CD8-positive, alpha-beta T cell (primary cell): ENCODE measurements at regions of chr12 and their contacts with region 1.

Region 1: GRCh38 chr12:56299853-56300643 is at the start of gene CS:
- DNase-seq: peak; percentile 97 to 99 (median 99)
- ATAC-seq: peak; percentile 95
- H3K4me3 ChIP-seq: peak within 1 kb of the TSS; percentile 67 to 80
- H3K4me3 Mint-ChIP-seq: peak within 1 kb of the TSS; percentile 95
- H3K27ac ChIP-seq: peak within 1 kb of the TSS; percentile 77 to 95
- H3K27ac Mint-ChIP-seq: peak within 1 kb of the TSS; percentile 94
- H3K4me1 ChIP-seq: peaks cover 45% of the 10 kb centered on the region
- H3K4me1 Mint-ChIP-seq: peaks cover 55% of the 10 kb centered on the region
- H3K27me3 ChIP-seq: no peaks in the 10 kb centered on the region
- H3K27me3 Mint-ChIP-seq: no peaks in the 10 kb centered on the region
- CTCF ChIP-seq: no peak
- total RNA-seq, gene CS: 154 to 159 TPM

Region 2: GRCh38 chr12:56258057-56258819 is 41.8 kb before region 1 on chr12 and contains the start of gene ANKRD52:
- CTCF ChIA-PET with region 1: no interaction called
- POLR2A ChIA-PET with region 1: interaction called, 3 read pairs
- intact Hi-C with region 1: loop called in 1 of 2 experiments (anchors 2 kb)
- DNase-seq: peak; percentile 61 to 92 (median 77)
- ATAC-seq: peak; percentile 95
- H3K4me3 ChIP-seq: peak within 1 kb of the TSS; percentile 79 to 99
- H3K4me3 Mint-ChIP-seq: peak within 1 kb of the TSS; percentile 94
- H3K27ac ChIP-seq: peak within 1 kb of the TSS; percentile 77
- H3K27ac Mint-ChIP-seq: peak within 1 kb of the TSS; percentile 88
- H3K4me1 ChIP-seq: peaks cover 21% of the 10 kb centered on the region
- H3K4me1 Mint-ChIP-seq: peaks cover 21% of the 10 kb centered on the region
- H3K27me3 ChIP-seq: no peaks in the 10 kb centered on the region
- H3K27me3 Mint-ChIP-seq: no peaks in the 10 kb centered on the region
- CTCF ChIP-seq: peak; percentile 64
- total RNA-seq, gene ANKRD52: 27.7 to 29.9 TPM

Region 3: DNA sequence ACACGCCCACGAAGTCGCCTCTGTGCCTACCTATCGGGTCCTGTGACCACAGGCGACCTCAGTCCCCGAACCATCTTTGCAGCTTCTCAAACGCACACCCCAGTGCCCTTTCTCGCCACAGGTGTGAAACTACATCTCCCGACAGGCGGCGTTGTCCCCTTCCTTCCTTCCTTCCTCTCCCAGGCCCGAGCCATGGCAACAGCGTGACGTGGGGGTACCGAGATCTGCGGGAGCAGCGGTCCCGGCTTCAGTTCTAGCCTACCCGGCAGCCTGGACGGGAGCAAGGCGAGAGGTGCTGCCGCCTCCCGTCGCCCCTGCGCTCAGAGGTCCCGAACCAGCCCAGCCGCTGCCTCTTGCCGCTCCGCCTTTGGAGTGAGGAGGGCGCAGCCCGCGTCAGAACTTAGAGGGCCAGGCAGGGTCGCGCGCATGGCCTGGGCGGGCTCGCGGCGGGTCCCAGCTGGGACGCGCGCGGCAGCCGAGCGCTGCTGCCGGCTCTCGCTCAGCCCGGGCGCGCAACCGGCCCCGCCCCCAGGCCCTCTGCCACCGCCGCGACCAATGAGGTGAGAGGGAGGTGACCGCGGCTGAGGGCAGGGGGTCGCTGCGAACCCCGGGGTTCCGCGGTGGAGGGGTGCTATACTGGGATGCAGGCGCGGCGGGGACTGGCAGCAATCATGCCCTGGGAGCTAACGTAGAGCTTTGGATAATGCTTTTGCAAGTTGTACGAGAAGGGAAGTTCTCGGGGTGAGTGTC is 33.2 kb before region 1 on chr12 and contains the start of gene COQ10A:
- CTCF ChIA-PET with region 1: interaction called, 5 read pairs
- POLR2A ChIA-PET with region 1: interaction called, 5 read pairs
- intact Hi-C with region 1: loop called (anchors 1 kb)
- DNase-seq: peak; percentile 77 to 95 (median 92)
- ATAC-seq: peak; percentile 87
- H3K4me3 ChIP-seq: peak within 1 kb of the TSS; percentile 87 to 89
- H3K4me3 Mint-ChIP-seq: peak within 1 kb of the TSS; percentile 92
- H3K27ac ChIP-seq: peak within 1 kb of the TSS; percentile 95 to 98
- H3K27ac Mint-ChIP-seq: peak within 1 kb of the TSS; percentile 92
- H3K4me1 ChIP-seq: peaks cover 12% of the 10 kb centered on the region
- H3K4me1 Mint-ChIP-seq: peaks cover 20% of the 10 kb centered on the region
- H3K27me3 ChIP-seq: no peaks in the 10 kb centered on the region
- H3K27me3 Mint-ChIP-seq: no peaks in the 10 kb centered on the region
- CTCF ChIP-seq: peak; percentile 66
- total RNA-seq, gene COQ10A: 29.5 to 38.8 TPM

Region 4: GRCh38 chr12:56286044-56286830 is 13.8 kb before region 1 on chr12:
- CTCF ChIA-PET with region 1: no interaction called
- POLR2A ChIA-PET with region 1: interaction called, 4 read pairs
- intact Hi-C with region 1: loop called in 1 of 2 experiments (anchors 1 kb)
- DNase-seq: no peak
- ATAC-seq: no peak
- H3K4me3 ChIP-seq: no peak overlapping the region
- H3K4me3 Mint-ChIP-seq: no peak overlapping the region
- H3K27ac ChIP-seq: no peak overlapping the region
- H3K27ac Mint-ChIP-seq: peak overlapping the region; percentile 41
- H3K4me1 ChIP-seq: peaks cover 5% of the 10 kb centered on the region
- H3K4me1 Mint-ChIP-seq: peaks cover 16% of the 10 kb centered on the region
- H3K27me3 ChIP-seq: no peaks in the 10 kb centered on the region
- H3K27me3 Mint-ChIP-seq: no peaks in the 10 kb centered on the region
- CTCF ChIP-seq: no peak

Region 5: GRCh38 chr12:56315622-56316473 is 15.8 kb after region 1 on chr12 and contains the start of gene CNPY2:
- CTCF ChIA-PET with region 1: no interaction called
- POLR2A ChIA-PET with region 1: interaction called, 3 read pairs
- intact Hi-C with region 1: loop called (anchors 1 kb)
- DNase-seq: peak; percentile 89 to 97 (median 95)
- ATAC-seq: peak; percentile 92
- H3K4me3 ChIP-seq: peak within 1 kb of the TSS; percentile 86 to 99
- H3K4me3 Mint-ChIP-seq: peak within 1 kb of the TSS; percentile 99
- H3K27ac ChIP-seq: peak within 1 kb of the TSS; percentile 70 to 98
- H3K27ac Mint-ChIP-seq: peak within 1 kb of the TSS; percentile 98
- H3K4me1 ChIP-seq: peaks cover 10% of the 10 kb centered on the region
- H3K4me1 Mint-ChIP-seq: peaks cover 16% of the 10 kb centered on the region
- H3K27me3 ChIP-seq: no peaks in the 10 kb centered on the region
- H3K27me3 Mint-ChIP-seq: no peaks in the 10 kb centered on the region
- CTCF ChIP-seq: no peak
- total RNA-seq, gene CNPY2: 23.5 to 33.9 TPM

Region 6: GRCh38 chr12:56333679-56334489 is 33.8 kb after region 1 on chr12 and contains the start of gene PAN2:
- CTCF ChIA-PET with region 1: no interaction called
- POLR2A ChIA-PET with region 1: no interaction called
- intact Hi-C with region 1: loop called in 1 of 2 experiments (anchors 1 kb)
- DNase-seq: peak; percentile 87 to 98 (median 93)
- ATAC-seq: peak; percentile 80
- H3K4me3 ChIP-seq: peak within 1 kb of the TSS; percentile 47 to 85
- H3K4me3 Mint-ChIP-seq: peak within 1 kb of the TSS; percentile 96
- H3K27ac ChIP-seq: peak within 1 kb of the TSS; percentile 97 to 100
- H3K27ac Mint-ChIP-seq: peak within 1 kb of the TSS; percentile 100
- H3K4me1 ChIP-seq: peaks cover 27% of the 10 kb centered on the region
- H3K4me1 Mint-ChIP-seq: peaks cover 53% of the 10 kb centered on the region
- H3K27me3 ChIP-seq: no peaks in the 10 kb centered on the region
- H3K27me3 Mint-ChIP-seq: no peaks in the 10 kb centered on the region
- CTCF ChIP-seq: peak; percentile 64
- total RNA-seq, gene PAN2: 111 to 113 TPM

Region 7: DNA sequence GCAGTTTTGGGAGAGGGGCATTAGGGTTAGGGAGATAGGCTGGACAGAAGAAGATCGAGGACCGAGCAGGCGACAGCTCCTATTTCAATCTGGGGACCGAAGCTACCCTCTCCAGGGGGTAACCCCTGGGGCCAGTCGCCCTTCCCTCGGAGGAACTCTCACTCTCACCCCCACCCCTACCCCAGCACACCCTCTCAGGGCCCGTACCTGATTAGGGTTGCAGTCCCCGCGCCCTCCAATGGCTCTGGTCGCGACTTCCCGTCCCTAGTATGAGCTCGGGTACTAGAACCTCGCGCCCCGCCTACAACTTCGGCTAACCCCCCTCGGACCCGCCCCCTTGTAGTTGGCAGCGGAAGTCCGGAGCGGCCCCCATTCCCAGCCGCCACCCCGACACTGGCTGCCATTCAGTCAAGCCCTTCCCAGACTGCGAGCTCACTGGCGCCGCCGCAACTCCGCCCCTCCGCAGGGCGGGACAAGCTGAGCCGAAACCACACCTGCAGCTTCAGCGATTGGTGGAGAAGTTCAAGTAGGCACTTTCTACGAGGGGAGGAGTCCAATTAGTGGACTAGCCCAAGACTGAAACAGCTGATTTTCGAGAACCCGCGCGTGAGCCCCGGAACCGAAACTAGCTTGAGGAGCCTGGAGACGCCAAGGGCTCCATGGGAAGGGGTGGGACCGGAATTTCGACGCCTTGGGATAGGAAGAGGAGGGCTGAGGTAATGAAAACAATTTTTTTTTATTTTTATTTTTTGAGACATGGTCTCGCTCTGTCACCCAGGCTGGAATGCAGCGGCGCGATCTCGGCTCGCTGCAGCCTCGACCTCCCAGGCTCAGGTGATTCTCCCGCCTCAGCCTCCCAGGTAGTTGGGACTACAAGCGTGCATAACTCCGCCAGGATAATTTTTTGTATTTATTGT is 60.1 kb after region 1 on chr12 and contains the start of gene STAT2:
- CTCF ChIA-PET with region 1: no interaction called
- POLR2A ChIA-PET with region 1: no interaction called
- intact Hi-C with region 1: loop called (anchors 1 kb)
- DNase-seq: peak; percentile 98 to 100 (median 99)
- ATAC-seq: peak; percentile 93
- H3K4me3 ChIP-seq: peak within 1 kb of the TSS; percentile 78 to 81
- H3K4me3 Mint-ChIP-seq: peak within 1 kb of the TSS; percentile 95
- H3K27ac ChIP-seq: peak within 1 kb of the TSS; percentile 76 to 78
- H3K27ac Mint-ChIP-seq: peak within 1 kb of the TSS; percentile 95
- H3K4me1 ChIP-seq: peaks cover 23% of the 10 kb centered on the region
- H3K4me1 Mint-ChIP-seq: peaks cover 34% of the 10 kb centered on the region
- H3K27me3 ChIP-seq: no peaks in the 10 kb centered on the region
- H3K27me3 Mint-ChIP-seq: no peaks in the 10 kb centered on the region
- CTCF ChIP-seq: no peak
- total RNA-seq, gene STAT2: 71.8 to 81.9 TPM